Posterior cingulate gyrus (tissue), 11 donors: ENCODE measurements at regions of chr2 and their contacts with region 1.

Region 1: DNA sequence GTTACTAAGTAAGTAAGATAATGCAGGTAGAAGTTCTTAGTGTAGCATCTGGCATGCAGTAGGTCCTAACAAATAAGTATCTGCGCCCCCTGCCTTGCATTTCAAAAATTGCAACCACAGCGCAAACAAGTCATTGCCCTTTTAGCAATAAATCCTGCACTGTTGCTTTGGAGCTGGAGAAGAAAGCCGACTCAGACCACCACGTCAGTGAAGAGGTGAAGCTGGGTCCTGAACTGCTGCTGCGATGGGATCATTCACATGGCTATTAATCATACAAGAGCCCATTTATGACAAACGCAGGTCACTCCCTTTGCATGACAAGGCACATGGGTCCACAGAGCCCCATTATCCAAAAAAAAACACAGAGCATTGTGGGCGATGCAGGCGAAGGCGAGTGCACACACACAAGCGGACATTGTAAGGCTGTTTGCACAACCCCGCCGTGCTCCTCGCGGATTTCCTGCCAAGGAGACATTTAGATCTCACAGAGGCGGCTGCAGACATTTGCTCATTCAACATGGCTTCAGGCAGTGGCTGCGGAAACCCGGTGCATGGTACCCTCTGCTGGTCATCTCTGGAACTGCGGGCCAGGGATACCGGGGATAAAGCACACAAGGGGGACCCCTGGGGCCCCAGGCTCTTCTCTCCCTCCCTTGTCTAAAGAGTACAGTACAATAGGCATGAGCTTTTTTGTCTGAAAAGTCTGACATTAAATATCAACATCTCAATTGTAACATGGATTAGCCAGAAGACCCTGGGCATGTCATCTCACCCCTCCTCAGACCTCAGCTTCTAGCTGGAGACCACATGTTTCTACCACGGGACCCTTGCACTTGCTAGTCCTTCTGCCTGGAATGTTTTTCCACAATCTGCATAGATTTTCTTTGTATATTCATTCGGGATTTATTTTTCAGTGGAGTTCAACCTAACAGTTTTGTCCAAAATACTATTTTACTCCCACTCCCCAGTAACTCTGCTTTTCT is 56.7 kb downstream of the CYRIA start:
- DNase-seq: peak; percentile 70 to 98 (median 90)

Region 2: GRCh38 chr2:16537347-16537746 is 71.6 kb before region 1 on chr2:
- intact Hi-C with region 1: no loop called
- DNase-seq: no peak

Region 3: GRCh38 chr2:16727256-16727655 is 118.3 kb after region 1 on chr2:
- intact Hi-C with region 1: loop called (anchors 2 kb)
- DNase-seq: peak in 2 of 10 donors; percentile 22 to 37

Region 4: DNA sequence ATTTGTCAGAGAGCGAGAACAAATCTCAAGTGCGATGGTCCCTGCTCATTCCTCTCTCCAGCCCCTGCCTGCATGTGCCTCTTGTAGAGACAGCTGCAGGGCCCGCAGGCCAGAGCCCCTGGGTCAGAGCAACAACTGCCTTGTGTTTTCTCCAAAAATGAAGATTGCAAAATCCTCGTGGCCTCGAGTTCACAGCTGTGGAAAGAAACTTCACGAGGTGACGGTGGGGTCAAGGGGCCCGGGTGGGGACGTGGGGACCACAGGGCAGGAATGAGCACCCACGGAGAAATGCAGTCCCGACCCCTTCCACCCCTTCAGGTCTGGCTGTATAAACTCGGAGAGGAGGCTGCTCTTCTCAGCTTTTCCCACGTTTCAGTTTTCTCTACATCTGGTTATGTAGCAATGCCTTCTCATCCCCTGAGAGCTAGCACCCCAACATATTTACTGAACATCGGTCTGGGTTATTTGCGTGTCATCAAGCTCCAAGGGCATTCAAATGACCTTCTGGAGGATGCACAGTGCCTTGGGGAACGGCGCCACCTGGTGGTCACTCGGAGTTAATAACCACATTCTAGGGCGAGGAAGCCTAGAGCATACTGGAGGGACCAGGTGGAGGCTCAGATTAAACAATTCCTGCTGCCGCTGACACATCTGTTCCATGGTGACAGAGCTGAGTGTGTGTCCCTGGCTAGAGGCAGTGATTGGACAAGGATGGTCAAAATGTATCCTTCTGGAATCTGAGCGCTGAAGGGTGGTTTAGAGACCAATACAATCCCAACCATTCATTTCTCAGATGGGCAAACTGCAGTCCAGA is 148.1 kb after region 1 on chr2:
- intact Hi-C with region 1: loop called (anchors 2 kb)
- DNase-seq: peak; percentile 77 to 98 (median 88)

Region 5: GRCh38 chr2:17058772-17059402 is 449.9 kb after region 1 on chr2:
- intact Hi-C with region 1: no loop called
- DNase-seq: no peak